ENCODE measurements at regions of chr10 and their contacts with region 1.

Region 1: GRCh38 chr10:128069351-128070051 is 56.7 kb downstream of the MKI67 start:
- DNase-seq: peak; percentile 84 to 92
- ATAC-seq: peak; percentile 65
- H3K4me3 ChIP-seq: no peak overlapping the region
- H3K27ac ChIP-seq: no peak overlapping the region
- H3K4me1 ChIP-seq: no peaks in the 10 kb centered on the region
- H3K27me3 ChIP-seq: no peaks in the 10 kb centered on the region

Region 2: GRCh38 chr10:127889605-127890195 is 179.8 kb before region 1 on chr10:
- intact Hi-C with region 1: loop called in 1 of 2 experiments (anchors 5 kb)
- DNase-seq: no peak
- ATAC-seq: no peak
- H3K4me3 ChIP-seq: no peak overlapping the region
- H3K27ac ChIP-seq: no peak overlapping the region
- H3K4me1 ChIP-seq: no peaks in the 10 kb centered on the region
- H3K27me3 ChIP-seq: no peaks in the 10 kb centered on the region

Region 3: DNA sequence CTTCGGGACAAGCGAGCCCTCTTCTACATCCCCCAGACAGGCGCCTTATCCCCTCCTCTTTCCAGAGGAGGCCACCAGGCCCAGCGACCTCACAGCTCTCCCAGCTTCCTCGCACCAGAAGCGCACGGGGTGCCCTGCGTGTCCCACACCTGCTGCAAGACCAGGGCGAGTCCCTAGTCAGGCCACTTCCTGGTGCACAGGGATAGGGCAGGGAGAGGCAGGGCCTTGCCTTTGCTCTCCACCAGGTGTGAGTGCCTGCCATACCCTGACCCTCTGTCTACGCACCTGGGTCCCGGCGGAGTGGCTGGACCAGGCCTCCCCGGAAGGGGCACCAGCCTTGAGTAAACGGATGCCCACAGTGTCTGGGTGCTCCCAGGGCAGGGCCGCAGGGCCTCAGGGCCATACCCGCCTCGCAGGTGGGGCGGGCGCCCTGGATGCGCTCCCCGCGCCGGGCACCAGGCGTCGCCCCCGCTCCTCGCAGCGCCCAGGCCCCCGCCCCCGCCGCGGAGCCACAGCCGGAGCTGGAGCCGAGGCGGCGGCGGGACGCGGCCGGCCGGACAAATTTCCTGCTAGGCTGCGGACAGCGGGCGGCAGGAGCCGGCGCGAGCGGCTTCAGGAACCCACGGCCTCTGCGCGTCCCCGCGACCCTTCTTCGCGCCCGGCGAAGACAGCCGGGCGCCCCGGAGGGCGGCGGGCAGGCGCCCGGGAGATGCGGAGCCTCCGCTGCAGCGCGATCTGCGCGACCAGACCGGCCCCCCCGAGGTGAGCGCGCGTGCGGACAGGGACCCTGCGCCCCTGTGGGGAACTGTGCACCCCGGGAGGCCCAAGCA is 162.7 kb before region 1 on chr10 and contains the start of gene PTPRE:
- intact Hi-C with region 1: loop called (anchors 5 kb)
- DNase-seq: peak; percentile 84 to 92
- ATAC-seq: peak; percentile 93
- H3K4me3 ChIP-seq: peak within 1 kb of the TSS; percentile 61 to 81
- H3K27ac ChIP-seq: peak within 1 kb of the TSS; percentile 20 to 59
- H3K4me1 ChIP-seq: no peaks in the 10 kb centered on the region
- H3K27me3 ChIP-seq: no peaks in the 10 kb centered on the region
- total RNA-seq, gene PTPRE: 41.3 to 46.0 TPM

Region 4: DNA sequence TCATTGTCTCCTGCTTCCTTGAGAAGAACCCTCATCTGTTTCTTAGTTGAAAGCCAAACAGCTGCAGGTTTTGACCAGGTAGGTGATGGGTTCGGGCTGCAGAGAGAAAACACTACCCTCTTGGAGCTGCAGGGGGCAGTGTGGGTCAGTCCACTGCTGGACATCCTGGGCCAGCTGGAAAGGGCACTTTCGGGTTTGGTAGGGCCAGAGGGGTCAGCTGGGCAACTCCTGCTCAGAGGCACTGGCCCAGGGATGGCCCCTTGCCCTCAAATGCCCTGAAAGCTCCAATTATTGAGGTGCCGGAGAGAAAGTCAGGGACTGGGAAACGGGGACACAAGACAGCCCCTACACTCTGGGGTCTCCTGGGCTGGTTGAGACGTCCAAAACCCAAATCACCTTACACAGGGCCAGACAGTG is 33.9 kb before region 1 on chr10:
- intact Hi-C with region 1: loop called (anchors 1 kb)
- DNase-seq: peak; percentile 75 to 84
- ATAC-seq: peak; percentile 83
- H3K4me3 ChIP-seq: no peak overlapping the region
- H3K27ac ChIP-seq: no peak overlapping the region
- H3K4me1 ChIP-seq: no peaks in the 10 kb centered on the region
- H3K27me3 ChIP-seq: no peaks in the 10 kb centered on the region

Measured in aorta (tissue), 5 donors.